Activated B cell treated with CpG ODN at 0.5 μM for 24 hours (primary cell): ENCODE measurements at regions of chr14 and their contacts with region 1.

Region 1: DNA sequence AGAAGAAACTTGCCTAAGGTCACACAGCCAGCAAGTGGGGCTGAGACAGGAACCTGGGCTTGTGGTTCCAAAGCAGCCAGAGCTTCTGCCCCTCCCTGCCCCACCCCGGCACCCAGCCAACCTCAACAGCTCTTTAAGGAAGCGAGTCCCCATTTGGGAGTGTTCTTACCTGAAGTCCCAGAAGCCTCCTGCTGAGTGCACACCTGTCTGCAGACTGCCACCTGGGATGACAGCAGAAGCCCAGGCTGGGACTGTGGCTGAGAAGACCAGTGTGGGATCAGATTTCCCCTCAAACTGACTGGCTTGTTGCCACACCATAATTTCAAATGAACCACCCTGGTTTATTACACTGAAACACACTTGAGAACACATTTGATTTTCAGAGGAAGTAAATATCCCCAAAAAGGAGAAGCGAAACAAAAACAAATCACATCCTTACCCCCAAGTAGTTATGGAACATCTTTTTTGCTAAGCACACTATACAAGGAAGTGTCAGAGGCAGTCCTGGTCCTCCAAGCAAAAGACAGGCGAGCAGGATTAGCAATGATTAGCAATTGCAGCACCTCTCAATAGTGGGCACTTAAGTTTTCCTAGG is 6.3 kb upstream of the RIN3 start:
- DNase-seq: peak; percentile 49
- ATAC-seq: peak; percentile 86
- H3K4me3 Mint-ChIP-seq: peak overlapping the region; percentile 39
- H3K27ac Mint-ChIP-seq: peak overlapping the region; percentile 50
- H3K4me1 Mint-ChIP-seq: peaks cover 56% of the 10 kb centered on the region
- H3K27me3 Mint-ChIP-seq: no peaks in the 10 kb centered on the region
- CTCF ChIP-seq: no peak

Region 2: GRCh38 chr14:92400579-92401444 is 106.5 kb before region 1 on chr14:
- CTCF ChIA-PET with region 1: no interaction called
- POLR2A ChIA-PET with region 1: no interaction called
- intact Hi-C with region 1: loop called (anchors 5 kb)
- DNase-seq: no peak
- ATAC-seq: peak; percentile 85
- H3K4me3 Mint-ChIP-seq: peak overlapping the region; percentile 29
- H3K27ac Mint-ChIP-seq: peak overlapping the region; percentile 77
- H3K4me1 Mint-ChIP-seq: peaks cover 32% of the 10 kb centered on the region
- H3K27me3 Mint-ChIP-seq: no peaks in the 10 kb centered on the region
- CTCF ChIP-seq: no peak

Region 3: DNA sequence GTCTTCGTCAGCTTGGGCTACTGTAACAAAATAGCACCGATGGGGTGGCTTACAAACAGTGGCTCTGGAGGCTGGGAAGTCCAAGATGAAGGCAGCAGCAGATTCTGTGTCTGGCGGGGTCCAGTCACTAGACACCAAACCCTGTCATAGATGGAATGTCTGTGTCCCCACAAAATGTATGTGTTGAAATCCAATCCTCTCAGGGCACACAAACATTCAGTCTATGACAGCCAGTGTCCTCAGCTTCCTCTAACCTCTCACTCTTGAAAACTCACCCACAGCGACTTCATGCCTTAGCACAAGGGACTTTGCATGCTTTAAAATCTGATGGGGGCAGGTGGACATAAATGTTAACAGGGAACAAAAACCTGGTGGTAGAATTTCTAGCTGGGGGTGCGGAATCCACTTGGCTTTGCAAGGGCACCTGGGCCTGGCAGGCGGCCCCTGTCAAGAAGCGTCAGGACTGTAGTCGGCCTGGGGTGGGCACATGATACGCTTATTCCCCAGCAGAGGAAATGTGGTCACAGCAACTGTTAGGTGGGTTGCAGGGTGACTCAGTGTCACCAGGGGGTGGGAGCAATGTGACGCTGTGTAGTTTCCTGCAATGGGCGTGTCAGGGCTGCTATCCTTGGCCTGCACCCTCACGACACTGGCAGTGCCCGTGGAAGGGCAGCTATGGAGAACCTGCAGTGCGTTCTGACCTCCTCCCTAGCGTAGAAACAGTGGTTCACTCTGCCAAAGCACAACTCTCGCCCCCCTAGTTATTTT is 24.0 kb after region 1 on chr14:
- CTCF ChIA-PET with region 1: no interaction called
- POLR2A ChIA-PET with region 1: no interaction called
- intact Hi-C with region 1: loop called (anchors 1 kb)
- DNase-seq: peak; percentile 41
- ATAC-seq: peak; percentile 89
- H3K4me3 Mint-ChIP-seq: peak overlapping the region; percentile 9
- H3K27ac Mint-ChIP-seq: peak overlapping the region; percentile 87
- H3K4me1 Mint-ChIP-seq: peaks cover 47% of the 10 kb centered on the region
- H3K27me3 Mint-ChIP-seq: no peaks in the 10 kb centered on the region
- CTCF ChIP-seq: no peak